Activated B cell treated with CpG ODN at 0.5 μM for 24 hours (primary cell): ENCODE measurements at regions of chr6 and their contacts with region 1.

Region 1: DNA sequence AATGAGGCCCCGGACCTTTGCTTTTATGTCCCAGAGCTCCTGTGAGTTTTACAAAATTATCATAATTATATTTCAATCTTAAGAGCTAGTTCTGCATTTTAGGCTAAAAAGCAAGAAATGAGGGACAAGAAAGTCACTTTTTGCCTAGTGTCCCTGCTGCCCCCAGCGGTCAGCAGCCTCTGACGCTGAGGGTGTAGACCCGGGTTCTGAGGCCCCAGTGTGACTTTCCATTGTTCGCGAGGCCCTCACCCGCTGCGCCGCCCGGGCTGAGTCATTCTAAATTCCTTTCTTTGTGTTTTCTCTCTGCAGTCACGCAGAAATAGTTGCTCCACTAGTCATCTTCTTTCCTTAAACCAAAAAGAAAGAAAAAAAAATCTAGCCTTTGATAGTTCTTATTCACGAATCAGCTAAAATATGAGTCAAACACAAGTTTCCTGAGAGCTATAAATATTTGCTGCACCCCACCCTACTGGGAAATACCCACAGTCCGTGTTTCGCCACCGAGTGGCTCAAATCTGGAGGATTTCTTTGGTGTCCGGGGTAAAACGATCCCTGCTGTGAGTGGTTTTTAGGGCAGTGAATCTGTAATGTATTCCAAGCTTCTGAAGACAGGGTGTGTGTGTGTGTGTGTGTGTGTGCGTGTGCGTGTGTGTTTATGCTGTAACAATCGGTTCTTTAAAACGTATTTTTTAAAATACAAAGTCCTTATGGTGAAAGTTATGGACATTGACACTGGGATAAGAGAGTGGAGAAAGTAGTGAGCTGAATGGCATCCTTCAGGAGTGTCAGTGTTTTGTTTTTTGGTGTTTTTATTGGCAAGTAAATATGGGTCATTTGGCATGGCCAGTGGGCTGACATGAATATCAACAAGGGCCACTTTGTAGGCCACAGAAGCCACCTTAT is 59.7 kb upstream of the EEF1A1 start:
- DNase-seq: peak; percentile 54
- ATAC-seq: peak; percentile 74
- H3K4me3 Mint-ChIP-seq: peak overlapping the region; percentile 80
- H3K27ac Mint-ChIP-seq: peak overlapping the region; percentile 98
- H3K4me1 Mint-ChIP-seq: peaks cover 48% of the 10 kb centered on the region
- H3K27me3 Mint-ChIP-seq: no peaks in the 10 kb centered on the region
- CTCF ChIP-seq: no peak

Region 2: DNA sequence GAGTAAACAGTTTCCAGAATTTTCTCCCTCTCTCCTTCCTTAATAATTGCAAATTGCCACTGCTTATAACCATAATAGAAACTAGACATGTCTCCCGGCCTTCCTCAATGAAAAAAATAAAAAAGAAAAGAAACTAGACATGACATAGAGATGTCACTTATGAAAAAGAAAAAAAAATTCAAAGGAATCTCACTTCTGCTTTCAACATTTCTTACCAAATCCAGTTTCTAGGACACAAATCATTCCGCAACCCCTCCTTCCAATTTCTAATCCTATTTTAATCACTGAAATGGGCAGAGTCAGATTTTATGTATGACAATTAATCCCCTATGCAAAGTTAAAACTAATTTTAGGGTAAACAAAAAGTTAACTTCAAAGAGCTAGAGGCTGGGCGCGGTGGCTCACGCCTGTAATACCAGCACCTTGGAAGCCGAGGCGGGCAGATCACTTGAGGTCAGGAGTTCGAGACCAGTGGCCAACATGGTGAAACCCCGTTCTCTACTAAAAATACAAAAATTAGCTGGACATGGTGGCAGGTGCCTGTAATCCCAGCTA is 19.6 kb before region 1 on chr6:
- CTCF ChIA-PET with region 1: interaction called, 3 read pairs
- POLR2A ChIA-PET with region 1: interaction called, 14 read pairs
- intact Hi-C with region 1: loop called (anchors 1 kb)
- DNase-seq: no peak
- ATAC-seq: peak; percentile 45
- H3K4me3 Mint-ChIP-seq: peak overlapping the region; percentile 25
- H3K27ac Mint-ChIP-seq: peak overlapping the region; percentile 38
- H3K4me1 Mint-ChIP-seq: peaks cover 13% of the 10 kb centered on the region
- H3K27me3 Mint-ChIP-seq: no peaks in the 10 kb centered on the region
- CTCF ChIP-seq: no peak